Naive thymus-derived CD4-positive, alpha-beta T cell (primary cell): ENCODE measurements at regions of chr13 and their contacts with region 1.

Region 1: GRCh38 chr13:95100525-95101433 is 200.5 kb downstream of the ABCC4 start:
- DNase-seq: no peak
- ATAC-seq: no peak
- H3K4me3 ChIP-seq: no peak overlapping the region
- H3K4me3 Mint-ChIP-seq: no peak overlapping the region
- H3K27ac ChIP-seq: no peak overlapping the region
- H3K27ac Mint-ChIP-seq: no peak overlapping the region
- H3K4me1 ChIP-seq: no peaks in the 10 kb centered on the region
- H3K4me1 Mint-ChIP-seq: no peaks in the 10 kb centered on the region
- H3K27me3 ChIP-seq: no peaks in the 10 kb centered on the region
- H3K27me3 Mint-ChIP-seq: no peaks in the 10 kb centered on the region

Region 2: GRCh38 chr13:94825507-94825906 is 275.3 kb before region 1 on chr13:
- CTCF ChIA-PET with region 1: no interaction called
- POLR2A ChIA-PET with region 1: no interaction called
- intact Hi-C with region 1: no loop called
- DNase-seq: no peak
- ATAC-seq: no peak
- H3K4me3 ChIP-seq: no peak overlapping the region
- H3K4me3 Mint-ChIP-seq: no peak overlapping the region
- H3K27ac ChIP-seq: no peak overlapping the region
- H3K27ac Mint-ChIP-seq: no peak overlapping the region
- H3K4me1 ChIP-seq: no peaks in the 10 kb centered on the region
- H3K4me1 Mint-ChIP-seq: no peaks in the 10 kb centered on the region
- H3K27me3 ChIP-seq: no peaks in the 10 kb centered on the region
- H3K27me3 Mint-ChIP-seq: peaks cover 4 to 17% (median 6%) of the 10 kb centered on the region in 5 donors

Region 3: GRCh38 chr13:95137096-95137495 is 36.3 kb after region 1 on chr13:
- CTCF ChIA-PET with region 1: no interaction called
- POLR2A ChIA-PET with region 1: no interaction called
- intact Hi-C with region 1: loop called in 1 of 2 experiments (anchors 2 kb)
- DNase-seq: no peak
- ATAC-seq: peak; percentile 72
- H3K4me3 ChIP-seq: no peak overlapping the region
- H3K4me3 Mint-ChIP-seq: no peak overlapping the region
- H3K27ac ChIP-seq: no peak overlapping the region
- H3K27ac Mint-ChIP-seq: peak overlapping the region in 1 of 9 donors; percentile 26
- H3K4me1 ChIP-seq: no peaks in the 10 kb centered on the region
- H3K4me1 Mint-ChIP-seq: peaks cover 0 to 9% (median 0%) of the 10 kb centered on the region in 7 donors
- H3K27me3 ChIP-seq: no peaks in the 10 kb centered on the region
- H3K27me3 Mint-ChIP-seq: no peaks in the 10 kb centered on the region

Region 4: GRCh38 chr13:95275322-95276036 is 174.7 kb after region 1 on chr13:
- CTCF ChIA-PET with region 1: no interaction called
- POLR2A ChIA-PET with region 1: no interaction called
- intact Hi-C with region 1: no loop called
- DNase-seq: no peak
- ATAC-seq: no peak
- H3K4me3 ChIP-seq: no peak overlapping the region
- H3K4me3 Mint-ChIP-seq: no peak overlapping the region
- H3K27ac ChIP-seq: no peak overlapping the region
- H3K27ac Mint-ChIP-seq: no peak overlapping the region
- H3K4me1 ChIP-seq: no peaks in the 10 kb centered on the region
- H3K4me1 Mint-ChIP-seq: peaks cover 2 to 12% (median 5%) of the 10 kb centered on the region in 7 donors
- H3K27me3 ChIP-seq: no peaks in the 10 kb centered on the region
- H3K27me3 Mint-ChIP-seq: no peaks in the 10 kb centered on the region